ENCODE measurements at regions of chr1 and their contacts with region 1.

Region 1: GRCh38 chr1:184754476-184755225 is at the start of gene EDEM3:
- DNase-seq: peak; percentile 99 to 100
- ATAC-seq: peak; percentile 97
- H3K4me3 ChIP-seq: peak within 1 kb of the TSS; percentile 94 to 97 (median 96)
- H3K27ac ChIP-seq: peak within 1 kb of the TSS; percentile 93 to 99 (median 96)
- H3K4me1 ChIP-seq: peaks cover 16 to 17% of the 10 kb centered on the region in 2 donors
- H3K27me3 ChIP-seq: no peaks in the 10 kb centered on the region
- CTCF ChIP-seq: peak in 1 of 5 experiments; percentile 15
- POLR2A ChIP-seq: peak; percentile 98
- total RNA-seq, gene EDEM3: 18.1 to 51.1 (median 31.9) TPM

Region 2: DNA sequence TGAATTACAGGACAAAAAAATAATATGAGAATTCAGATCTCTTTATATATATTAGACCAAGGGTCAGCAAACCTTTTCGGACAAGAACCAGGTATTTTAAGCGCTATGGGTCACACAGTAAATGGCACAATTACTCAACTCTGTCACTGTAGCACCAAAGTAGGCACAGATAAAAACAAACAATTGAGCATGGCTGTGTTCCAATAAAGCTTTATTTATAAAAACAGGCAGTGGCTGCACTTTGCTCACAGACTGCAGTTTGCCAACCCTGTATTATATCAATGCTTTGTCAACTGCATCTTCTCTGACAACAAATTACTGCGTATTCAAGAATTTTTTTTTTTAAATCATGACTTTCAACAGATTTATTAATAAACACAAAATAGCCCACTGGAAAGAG is 29.8 kb before region 1 on chr1:
- in situ Hi-C with region 1: no loop called
- intact Hi-C with region 1: no loop called
- DNase-seq: no peak
- ATAC-seq: no peak
- H3K4me3 ChIP-seq: no peak overlapping the region
- H3K27ac ChIP-seq: no peak overlapping the region
- H3K4me1 ChIP-seq: no peaks in the 10 kb centered on the region
- H3K27me3 ChIP-seq: no peaks in the 10 kb centered on the region
- CTCF ChIP-seq: no peak
- POLR2A ChIP-seq: no peak

Region 3: DNA sequence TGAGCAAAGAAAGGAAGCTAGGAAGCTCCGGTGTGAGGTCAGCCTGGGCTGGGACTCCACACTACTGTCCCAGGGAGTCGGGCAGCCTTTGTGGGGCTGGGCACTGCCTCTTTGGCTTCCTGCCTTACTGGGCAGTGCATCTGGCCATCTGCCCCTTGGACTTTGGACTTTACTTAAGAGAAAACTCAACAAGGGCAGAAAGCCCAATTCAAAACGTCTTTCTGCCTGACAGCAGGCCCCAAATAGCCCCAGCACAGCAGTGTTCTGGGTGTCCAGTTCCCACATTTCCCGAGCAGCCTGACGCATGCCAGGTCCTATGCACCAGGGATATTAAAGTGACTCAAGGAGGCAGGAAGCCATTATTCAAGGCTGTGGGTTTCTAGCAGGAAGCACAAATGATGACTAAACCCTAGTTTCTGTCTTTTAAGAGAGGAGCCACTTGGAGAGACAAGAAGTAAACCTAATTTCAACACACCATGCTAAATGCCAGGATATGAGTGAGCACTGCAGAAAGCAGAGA is 37.9 kb after region 1 on chr1:
- in situ Hi-C with region 1: no loop called
- intact Hi-C with region 1: loop called (anchors 1 kb)
- DNase-seq: peak; percentile 87 to 94
- ATAC-seq: peak; percentile 97 to 99
- H3K4me3 ChIP-seq: peak overlapping the region in 2 of 4 donors; percentile 5 to 14
- H3K27ac ChIP-seq: peak overlapping the region; percentile 83 to 91 (median 87)
- H3K4me1 ChIP-seq: peaks cover 19 to 22% of the 10 kb centered on the region in 2 donors
- H3K27me3 ChIP-seq: no peaks in the 10 kb centered on the region
- CTCF ChIP-seq: no peak
- POLR2A ChIP-seq: peak in 1 of 2 donors; percentile 42

Region 4: DNA sequence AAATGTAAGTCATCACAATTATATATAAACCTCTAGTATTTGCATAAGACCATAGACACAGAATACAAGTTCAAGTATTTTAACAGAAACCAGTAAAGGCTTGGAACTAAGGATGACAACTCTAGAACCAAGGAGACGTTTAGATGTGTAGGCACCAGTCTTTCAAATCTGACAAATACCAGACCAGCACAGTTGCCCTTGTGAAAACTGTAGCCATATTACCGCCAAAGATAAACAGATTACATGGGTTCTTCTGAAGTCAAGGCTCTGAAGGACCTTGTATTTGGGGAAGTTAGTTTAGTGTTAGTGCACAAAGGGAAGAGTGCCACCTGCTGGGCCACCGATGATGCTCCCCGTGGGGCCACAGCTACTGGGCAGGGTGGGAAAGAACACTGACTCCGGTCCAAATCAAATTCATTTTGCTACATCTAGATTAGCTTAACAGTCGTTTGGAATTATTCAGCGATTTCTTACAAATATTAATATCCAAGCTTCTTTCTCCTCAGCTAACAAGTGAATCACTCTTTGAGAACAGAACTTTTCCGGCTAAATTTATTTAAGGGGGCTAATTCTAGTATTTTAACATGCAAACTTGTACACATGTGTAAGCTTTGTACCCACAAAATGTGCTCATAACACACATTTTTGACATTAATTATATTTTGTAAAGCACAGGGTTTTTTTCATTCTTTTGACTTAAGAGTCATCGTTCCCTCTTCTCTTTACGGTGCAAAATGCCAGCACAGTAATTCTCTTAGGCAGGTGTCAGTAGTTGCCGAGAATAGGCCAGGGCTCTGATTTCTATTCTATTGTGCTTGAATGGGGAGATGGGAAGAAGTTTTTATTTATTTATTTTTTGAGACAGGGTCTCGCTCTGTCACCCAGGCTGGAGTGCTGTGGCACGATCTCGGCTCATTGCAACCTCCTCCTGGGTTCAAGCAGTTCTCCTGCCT is 227.6 kb after region 1 on chr1:
- in situ Hi-C with region 1: no loop called
- intact Hi-C with region 1: loop called (anchors 2 kb)
- DNase-seq: peak; percentile 60 to 71
- ATAC-seq: peak; percentile 93 to 99
- H3K4me3 ChIP-seq: no peak overlapping the region
- H3K27ac ChIP-seq: no peak overlapping the region
- H3K4me1 ChIP-seq: peaks cover 6% of the 10 kb centered on the region in 2 donors
- H3K27me3 ChIP-seq: no peaks in the 10 kb centered on the region
- CTCF ChIP-seq: peak; percentile 89 to 96 (median 93)
- POLR2A ChIP-seq: no peak

Measured in gastrocnemius medialis (tissue), 4 donors.